ENCODE measurements at regions of chr3 and their contacts with region 1.

Region 1: GRCh38 chr3:193686665-193687483 is 93.9 kb downstream of the OPA1 start:
- DNase-seq: no peak
- ATAC-seq: peak; percentile 30; the same call in 2 of the 3 replicates
- H3K4me3 ChIP-seq: no peak overlapping the region
- H3K27ac ChIP-seq: no peak overlapping the region
- H3K4me1 ChIP-seq: no peaks in the 10 kb centered on the region
- H3K27me3 ChIP-seq: no peaks in the 10 kb centered on the region
- CTCF ChIP-seq: no peak
- EP300 ChIP-seq: no peak
- POLR2A ChIP-seq: no peak
- RAD21 ChIP-seq: no peak

Region 2: DNA sequence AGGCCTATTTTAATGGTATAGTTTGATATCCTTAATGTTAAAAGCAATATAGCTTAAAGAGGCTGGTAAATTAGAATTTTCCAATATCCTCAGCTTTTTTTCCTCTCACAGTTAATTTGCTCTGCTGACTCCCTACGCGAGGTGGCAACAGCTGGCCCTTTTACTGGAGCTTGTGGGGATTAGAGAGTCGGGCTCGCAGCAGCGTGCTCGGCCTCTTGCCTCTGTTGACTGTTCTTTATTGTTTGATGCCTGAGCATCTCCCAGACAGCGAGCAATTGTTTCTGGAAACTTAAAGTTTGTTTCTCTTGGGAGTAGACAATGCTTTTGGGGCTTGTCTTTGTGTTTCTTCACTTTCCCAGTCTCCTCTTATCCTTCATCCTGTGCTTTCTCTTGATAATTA is 13.0 kb before region 1 on chr3:
- CTCF ChIA-PET with region 1: no interaction called
- POLR2A ChIA-PET with region 1: interaction called, 3 read pairs
- RAD21 ChIA-PET with region 1: interaction called, 4 read pairs
- SMC1A ChIA-PET with region 1: interaction called, 13 read pairs
- in situ Hi-C with region 1: no loop called
- intact Hi-C with region 1: no loop called
- DNase-seq: no peak
- ATAC-seq: no peak
- H3K4me3 ChIP-seq: no peak overlapping the region
- H3K27ac ChIP-seq: no peak overlapping the region
- H3K4me1 ChIP-seq: no peaks in the 10 kb centered on the region
- H3K27me3 ChIP-seq: no peaks in the 10 kb centered on the region
- CTCF ChIP-seq: no peak
- EP300 ChIP-seq: no peak
- POLR2A ChIP-seq: no peak
- RAD21 ChIP-seq: no peak

Region 3: DNA sequence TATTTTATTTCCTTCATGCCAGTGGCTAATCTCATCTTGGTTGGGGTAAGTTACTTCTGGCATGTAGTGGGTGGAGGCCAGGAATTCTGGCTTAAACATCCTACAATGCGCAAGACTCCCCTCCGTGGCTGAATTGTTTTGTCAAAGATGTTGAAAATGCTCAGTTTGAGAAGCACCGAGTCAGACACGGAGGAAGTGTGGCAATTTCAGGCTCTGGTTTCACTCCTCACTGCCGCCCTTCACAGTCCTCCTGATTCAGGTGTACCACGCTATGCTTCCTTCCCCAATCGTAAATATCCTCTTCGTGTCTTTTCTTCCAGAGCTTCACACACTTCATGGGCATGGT is 56.8 kb after region 1 on chr3:
- CTCF ChIA-PET with region 1: interaction called, 3 read pairs
- POLR2A ChIA-PET with region 1: no interaction called
- RAD21 ChIA-PET with region 1: interaction called, 5 read pairs
- SMC1A ChIA-PET with region 1: interaction called, 12 read pairs
- in situ Hi-C with region 1: no loop called
- intact Hi-C with region 1: no loop called
- DNase-seq: no peak
- ATAC-seq: peak; percentile 84
- H3K4me3 ChIP-seq: peak overlapping the region; percentile 46; the same call in 1 of the 2 replicates
- H3K27ac ChIP-seq: peak overlapping the region; percentile 85
- H3K4me1 ChIP-seq: peaks cover 14% of the 10 kb centered on the region
- H3K27me3 ChIP-seq: no peaks in the 10 kb centered on the region
- CTCF ChIP-seq: no peak
- EP300 ChIP-seq: no peak
- POLR2A ChIP-seq: no peak
- RAD21 ChIP-seq: no peak

Measured in GM12878 (cell line).